ENCODE measurements at regions of chr5 and their contacts with region 1.

Region 1: GRCh38 chr5:73454351-73455036 is 5.9 kb upstream of the FOXD1 start:
- DNase-seq: peak; percentile 83
- H3K4me3 ChIP-seq: no peak overlapping the region
- H3K27ac ChIP-seq: no peak overlapping the region
- H3K4me1 ChIP-seq: peaks cover 10 to 17% (median 13%) of the 10 kb centered on the region in 4 donors
- H3K27me3 ChIP-seq: peaks cover 4 to 62% (median 30%) of the 10 kb centered on the region in 4 donors
- CTCF ChIP-seq: peak; percentile 53 to 76 (median 55)
- EP300 ChIP-seq: no peak
- POLR2A ChIP-seq: no peak

Region 2: DNA sequence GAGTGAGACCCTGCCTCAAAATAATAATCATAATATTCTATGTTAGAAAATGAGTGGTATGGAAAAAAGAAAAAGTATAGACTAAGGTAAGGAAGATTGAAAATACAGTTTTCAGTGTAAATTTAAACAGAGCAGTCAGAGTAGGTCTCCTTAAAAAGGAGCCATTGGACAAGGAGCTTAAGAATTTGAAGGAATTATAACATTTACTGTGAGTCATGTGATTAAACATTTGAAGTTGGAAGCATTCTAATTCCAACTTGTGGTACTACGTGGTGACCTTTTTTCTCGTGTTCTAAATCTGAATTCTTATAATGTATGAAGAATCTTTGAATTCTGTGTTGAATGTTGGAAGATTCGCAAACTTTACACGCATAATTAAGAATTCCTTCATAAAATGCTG is 373.4 kb before region 1 on chr5:
- intact Hi-C with region 1: loop called (anchors 5 kb)
- DNase-seq: no peak
- H3K4me3 ChIP-seq: no peak overlapping the region
- H3K27ac ChIP-seq: no peak overlapping the region
- H3K4me1 ChIP-seq: no peaks in the 10 kb centered on the region
- H3K27me3 ChIP-seq: no peaks in the 10 kb centered on the region
- CTCF ChIP-seq: no peak
- EP300 ChIP-seq: no peak
- POLR2A ChIP-seq: no peak

Region 3: GRCh38 chr5:73215891-73216610 is 238.4 kb before region 1 on chr5:
- intact Hi-C with region 1: loop called (anchors 1 kb)
- DNase-seq: peak; percentile 92
- H3K4me3 ChIP-seq: peak overlapping the region; percentile 46 to 68 (median 54)
- H3K27ac ChIP-seq: peak overlapping the region; percentile 0 to 70 (median 50)
- H3K4me1 ChIP-seq: peaks cover 12 to 17% (median 15%) of the 10 kb centered on the region in 4 donors
- H3K27me3 ChIP-seq: peaks cover 0 to 40% (median 0%) of the 10 kb centered on the region in 4 donors
- CTCF ChIP-seq: peak; percentile 77 to 92 (median 91)
- EP300 ChIP-seq: no peak
- POLR2A ChIP-seq: no peak

Region 4: DNA sequence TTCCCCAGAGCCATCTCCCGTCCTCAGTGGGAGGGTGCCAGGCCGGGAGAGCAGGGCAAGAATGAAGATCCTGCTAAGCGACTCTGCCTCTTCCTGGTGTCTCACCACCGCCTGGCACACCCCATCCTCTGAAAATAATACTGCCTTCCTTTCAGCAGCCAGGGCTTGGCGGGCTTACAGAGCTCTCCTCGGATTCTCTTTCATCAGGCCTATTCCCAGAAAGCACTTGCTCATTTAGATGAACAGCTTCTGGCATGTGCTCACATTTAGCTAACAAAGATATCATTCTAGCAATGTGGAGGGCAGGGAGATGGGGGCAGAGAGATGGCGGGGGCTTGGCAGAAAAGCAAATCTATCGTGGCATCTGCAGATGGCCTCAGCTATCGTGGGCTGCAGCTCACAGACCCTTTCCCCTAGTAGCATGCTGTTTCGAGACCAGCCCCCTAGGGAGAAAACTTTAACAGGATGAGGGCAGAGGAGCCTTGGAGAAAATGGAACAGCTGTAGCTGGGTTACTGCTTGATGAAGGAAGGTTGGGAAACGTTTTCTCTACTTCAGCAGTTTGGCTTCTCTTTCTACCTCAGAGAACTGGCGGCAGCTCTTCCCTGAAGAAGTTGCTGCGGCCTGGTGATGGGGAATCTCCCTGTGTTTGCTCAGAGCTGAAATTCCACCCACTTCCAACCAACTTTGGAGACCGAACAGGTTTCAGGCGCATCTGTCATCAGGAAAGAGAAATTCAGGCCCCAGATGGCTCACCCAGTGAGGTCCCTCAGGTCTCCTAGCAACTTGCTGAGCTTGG is 179.4 kb before region 1 on chr5:
- intact Hi-C with region 1: no loop called
- DNase-seq: no peak
- H3K4me3 ChIP-seq: peak overlapping the region; percentile 25 to 40 (median 32)
- H3K27ac ChIP-seq: peak overlapping the region; percentile 22 to 75 (median 59)
- H3K4me1 ChIP-seq: peaks cover 0 to 32% (median 29%) of the 10 kb centered on the region in 4 donors
- H3K27me3 ChIP-seq: no peaks in the 10 kb centered on the region
- CTCF ChIP-seq: no peak
- EP300 ChIP-seq: no peak
- POLR2A ChIP-seq: no peak

Region 5: GRCh38 chr5:73298772-73299630 is 155.5 kb before region 1 on chr5:
- intact Hi-C with region 1: loop called (anchors 5 kb)
- DNase-seq: no peak
- H3K4me3 ChIP-seq: peak overlapping the region; percentile 33 to 47 (median 38)
- H3K27ac ChIP-seq: no peak overlapping the region
- H3K4me1 ChIP-seq: peaks cover 24 to 40% (median 34%) of the 10 kb centered on the region in 4 donors
- H3K27me3 ChIP-seq: peaks cover 9 to 86% (median 57%) of the 10 kb centered on the region in 4 donors
- CTCF ChIP-seq: peak; percentile 17 to 36 (median 22)
- EP300 ChIP-seq: no peak
- POLR2A ChIP-seq: no peak

Measured in esophagus muscularis mucosa (tissue), 4 donors.